ENCODE measurements at regions of chr1 and their contacts with region 1.

Region 1: DNA sequence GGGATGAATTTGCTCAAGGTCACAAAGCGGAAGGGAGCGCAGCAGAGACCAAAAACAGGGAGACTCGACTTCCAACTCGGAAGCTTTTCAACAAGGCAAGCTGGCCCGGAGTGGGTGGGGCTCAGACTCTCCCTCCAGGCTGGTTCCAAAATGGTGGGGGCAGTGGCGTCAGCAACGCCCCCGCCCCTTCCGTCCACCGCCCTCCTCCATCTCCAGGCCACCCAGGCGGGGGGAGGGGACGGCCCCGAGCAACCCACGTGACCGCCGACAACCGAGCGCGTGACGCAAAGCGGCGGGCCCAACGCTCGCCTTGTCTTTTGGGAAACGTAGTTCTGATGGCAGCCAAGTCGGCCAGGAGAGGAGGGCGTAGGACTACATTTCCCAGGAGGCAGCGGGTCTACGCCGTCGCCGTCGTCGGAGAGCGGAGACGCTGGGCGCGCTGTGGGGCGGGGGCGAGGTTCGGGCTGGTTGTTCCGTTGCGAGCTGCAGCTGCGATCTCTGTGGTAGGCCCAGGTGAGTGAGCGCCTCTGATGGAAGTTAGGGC is at the start of gene THRAP3:
- H3K4me3 Mint-ChIP-seq: peak within 1 kb of the TSS; percentile 98
- H3K27ac Mint-ChIP-seq: peak within 1 kb of the TSS; percentile 99
- H3K4me1 Mint-ChIP-seq: peaks cover 34% of the 10 kb centered on the region
- H3K27me3 Mint-ChIP-seq: no peaks in the 10 kb centered on the region

Region 2: DNA sequence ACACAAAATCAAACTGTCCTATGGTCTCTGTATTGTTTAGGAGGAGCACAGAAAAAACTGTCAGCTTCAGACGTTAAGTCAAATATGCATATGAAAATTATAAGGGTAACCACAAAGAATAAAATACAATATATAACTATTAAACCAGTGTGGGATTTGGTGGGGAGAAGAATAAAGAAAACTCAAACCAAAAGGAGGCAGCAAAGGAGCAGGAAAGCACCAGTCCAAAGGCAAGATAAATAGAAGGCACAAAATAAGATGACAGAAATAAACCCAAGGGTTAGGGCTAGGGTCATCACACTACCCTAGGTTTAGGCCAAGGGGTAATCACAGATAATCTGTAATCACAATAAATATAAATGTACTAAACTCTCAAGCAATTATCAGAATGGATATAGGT is 1327.5 kb before region 1 on chr1:
- intact Hi-C with region 1: no loop called
- H3K4me3 Mint-ChIP-seq: no peak overlapping the region
- H3K27ac Mint-ChIP-seq: no peak overlapping the region
- H3K4me1 Mint-ChIP-seq: no peaks in the 10 kb centered on the region
- H3K27me3 Mint-ChIP-seq: peaks cover 15% of the 10 kb centered on the region

Region 3: GRCh38 chr1:36187800-36188593 is 36.1 kb before region 1 on chr1:
- intact Hi-C with region 1: loop called (anchors 5 kb)
- H3K4me3 Mint-ChIP-seq: no peak overlapping the region
- H3K27ac Mint-ChIP-seq: peak overlapping the region; percentile 83
- H3K4me1 Mint-ChIP-seq: peaks cover 17% of the 10 kb centered on the region
- H3K27me3 Mint-ChIP-seq: no peaks in the 10 kb centered on the region

Region 4: DNA sequence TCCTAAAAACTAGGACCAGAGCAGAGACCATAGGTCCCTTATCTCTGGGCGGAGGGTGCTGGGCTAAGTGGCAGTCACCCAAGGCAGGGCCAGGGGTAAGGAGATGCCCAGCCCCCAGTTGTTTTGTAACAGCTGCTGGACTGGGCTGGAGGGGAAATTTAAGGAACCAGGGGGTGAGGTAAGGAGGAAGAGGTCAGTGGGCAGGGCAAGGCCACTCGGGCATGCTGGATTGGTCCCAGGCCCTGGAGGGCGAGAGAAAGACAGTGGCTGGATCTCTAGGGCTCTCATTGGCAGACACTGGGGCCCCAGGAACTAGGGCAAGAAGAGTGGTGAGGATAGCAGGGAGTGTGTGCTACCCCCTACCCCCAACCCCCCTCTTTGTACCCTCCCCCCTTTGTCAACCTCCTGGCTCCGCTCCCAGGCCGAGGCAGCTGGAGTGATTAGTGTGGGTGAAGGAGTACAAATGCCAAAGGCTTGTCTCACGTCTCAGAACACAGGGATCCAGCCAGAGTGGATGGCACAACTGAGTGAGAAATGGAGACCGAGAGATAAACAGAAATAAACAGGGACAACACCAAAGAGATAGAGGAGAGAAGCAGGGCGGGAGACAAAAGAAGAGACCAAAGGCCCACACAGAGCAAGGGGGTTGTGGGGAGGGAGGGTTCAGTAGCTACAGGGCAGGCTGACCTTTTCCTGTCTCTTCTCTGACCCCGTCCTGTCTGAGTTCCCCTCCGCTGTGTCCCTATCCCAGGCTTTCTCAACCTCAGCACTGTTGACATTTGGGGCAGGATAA is 20.3 kb before region 1 on chr1:
- intact Hi-C with region 1: loop called (anchors 1 kb)
- H3K4me3 Mint-ChIP-seq: no peak overlapping the region
- H3K27ac Mint-ChIP-seq: peak overlapping the region; percentile 89
- H3K4me1 Mint-ChIP-seq: peaks cover 17% of the 10 kb centered on the region
- H3K27me3 Mint-ChIP-seq: no peaks in the 10 kb centered on the region

Region 5: GRCh38 chr1:36300526-36300925 is 76.5 kb after region 1 on chr1:
- intact Hi-C with region 1: no loop called
- H3K4me3 Mint-ChIP-seq: no peak overlapping the region
- H3K27ac Mint-ChIP-seq: peak overlapping the region; percentile 42
- H3K4me1 Mint-ChIP-seq: peaks cover 56% of the 10 kb centered on the region
- H3K27me3 Mint-ChIP-seq: no peaks in the 10 kb centered on the region